Activated CD8-positive, alpha-beta T cell treated with anti-CD3 and anti-CD28 coated beads for 36 hours (primary cell): ENCODE measurements at regions of chr11 and their contacts with region 1.

Region 1: DNA sequence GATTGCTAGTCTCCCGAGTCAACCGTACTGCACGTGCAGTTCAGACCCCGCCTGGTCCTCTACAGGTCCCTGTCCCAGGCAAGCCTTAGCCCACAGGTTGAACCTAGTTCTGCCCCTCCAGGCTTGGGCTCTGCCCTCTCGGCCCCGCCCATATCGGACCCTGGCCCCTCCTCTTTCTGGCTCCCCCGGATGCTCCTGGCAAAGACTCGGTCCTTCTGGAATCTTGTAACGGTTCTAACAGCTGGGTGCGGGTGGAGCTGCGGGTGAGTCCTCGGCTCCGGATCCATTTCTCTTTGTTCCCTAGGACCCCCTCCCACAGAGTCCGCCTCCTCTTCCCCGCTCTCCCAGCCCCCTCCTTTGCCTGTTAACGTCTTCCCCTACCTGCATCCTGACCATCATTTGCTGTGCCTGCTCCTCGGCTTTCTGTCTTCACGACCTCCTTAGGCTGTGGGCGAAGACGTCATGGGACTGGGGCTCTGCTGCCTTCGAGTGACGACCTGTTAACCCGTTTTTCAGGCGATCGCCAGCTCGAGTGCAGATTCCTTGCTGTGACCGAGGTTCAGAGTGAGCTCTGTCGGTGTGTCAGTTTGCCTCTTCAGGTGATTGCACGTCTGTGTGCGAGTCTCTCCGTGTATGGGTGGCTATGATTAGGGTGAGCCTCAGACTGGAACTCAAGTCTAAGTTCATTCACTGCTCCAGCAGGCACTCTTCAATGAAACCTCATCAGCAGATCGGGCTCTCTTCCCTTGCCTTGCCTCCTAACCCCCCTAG is at the start of gene DNHD1:
- DNase-seq: no peak
- ATAC-seq: no peak
- H3K4me3 Mint-ChIP-seq: no peak within 1 kb of the TSS
- H3K27ac Mint-ChIP-seq: no peak within 1 kb of the TSS
- H3K4me1 Mint-ChIP-seq: peaks cover 4% of the 10 kb centered on the region
- H3K27me3 Mint-ChIP-seq: no peaks in the 10 kb centered on the region
- CTCF ChIP-seq: no peak
- total RNA-seq, gene DNHD1: 27.5 to 28.2 TPM

Region 2: DNA sequence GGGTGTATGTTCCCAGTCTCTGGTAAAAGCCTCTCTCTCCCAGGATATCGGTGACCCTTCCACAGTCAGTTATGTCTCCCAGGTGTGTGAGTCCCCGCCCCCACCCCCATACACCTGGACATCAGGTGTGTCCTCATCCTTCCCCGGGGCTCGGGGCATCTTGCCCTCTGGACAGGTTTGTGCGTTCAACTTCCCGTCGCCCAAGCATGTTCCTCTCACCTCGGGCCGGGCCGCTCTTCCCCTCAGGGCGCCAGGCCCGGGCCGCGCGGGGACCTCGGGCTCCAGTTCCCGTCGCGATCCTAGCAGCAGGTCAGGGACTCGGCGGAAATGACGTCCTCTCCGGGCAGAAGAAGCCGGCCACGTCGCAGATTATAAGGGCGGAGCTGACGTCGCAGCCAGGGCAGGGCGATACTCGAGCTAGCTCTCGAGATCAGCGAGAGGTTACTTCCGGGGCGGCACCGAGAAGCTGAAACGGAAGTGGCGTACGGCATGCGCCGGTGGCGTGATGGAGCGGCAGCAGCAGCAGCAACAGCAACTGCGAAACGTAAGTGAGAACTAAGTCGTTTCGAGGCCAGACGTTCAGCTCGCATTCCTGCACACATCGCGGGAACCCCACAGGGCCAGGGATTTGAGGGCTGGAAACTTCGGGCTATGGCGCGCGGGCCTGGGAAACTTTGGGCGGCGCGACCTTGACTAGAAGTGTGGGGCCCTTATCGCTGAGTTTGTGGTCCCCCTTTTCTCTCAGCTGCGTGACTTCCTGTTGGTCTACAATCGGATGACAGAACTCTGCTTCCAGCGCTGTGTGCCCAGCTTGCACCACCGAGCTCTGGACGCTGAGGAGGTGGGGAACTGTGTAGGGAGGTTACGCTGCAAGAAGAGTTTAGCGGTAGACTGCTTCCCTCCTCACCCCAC is 16.0 kb before region 1 on chr11 and contains the starts of genes ARFIP2 and TIMM10B:
- CTCF ChIA-PET with region 1: no interaction called
- POLR2A ChIA-PET with region 1: interaction called, 25 read pairs
- intact Hi-C with region 1: no loop called
- DNase-seq: peak; percentile 99
- ATAC-seq: peak; percentile 98
- H3K4me3 Mint-ChIP-seq: peak within 1 kb of the TSS; percentile 87
- H3K27ac Mint-ChIP-seq: peak within 1 kb of the TSS; percentile 96
- H3K4me1 Mint-ChIP-seq: peaks cover 34% of the 10 kb centered on the region
- H3K27me3 Mint-ChIP-seq: no peaks in the 10 kb centered on the region
- CTCF ChIP-seq: no peak
- total RNA-seq, gene ARFIP2: 36.9 to 38.3 TPM
- total RNA-seq, gene TIMM10B: 40.6 to 43.0 TPM